IMR-90 (cell line): ENCODE measurements at regions of chr2 and their contacts with region 1.

Region 1: DNA sequence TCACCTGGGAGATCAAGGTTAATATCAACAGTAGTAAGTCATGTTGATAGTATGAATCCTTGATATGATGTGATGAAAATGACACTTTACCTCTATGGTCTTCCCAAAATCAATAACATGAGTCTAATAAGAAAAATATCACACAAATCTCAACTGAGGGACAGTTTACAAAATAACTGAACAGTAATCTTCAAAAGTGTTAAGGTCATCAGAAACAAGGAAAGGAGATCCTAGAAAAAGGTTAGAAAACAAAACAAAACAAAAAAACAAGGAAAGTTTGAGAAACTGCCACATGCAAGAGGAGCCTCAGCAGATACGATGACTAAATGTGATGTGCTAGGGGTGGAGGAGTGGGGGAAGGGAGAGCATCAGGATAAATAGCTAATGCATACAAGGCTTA is 16.2 kb downstream of the MCEE start:
- DNase-seq: no peak
- ATAC-seq: no peak
- H3K4me3 ChIP-seq: no peak overlapping the region
- H3K27ac ChIP-seq: no peak overlapping the region
- H3K4me1 ChIP-seq: no peaks in the 10 kb centered on the region
- H3K27me3 ChIP-seq: no peaks in the 10 kb centered on the region
- CTCF ChIP-seq: no peak
- POLR2A ChIP-seq: no peak
- RAD21 ChIP-seq: no peak

Region 2: GRCh38 chr2:71043531-71044407 is 70.1 kb before region 1 on chr2:
- CTCF ChIA-PET with region 1: no interaction called
- POLR2A ChIA-PET with region 1: no interaction called
- dilution Hi-C with region 1: no loop called
- in situ Hi-C with region 1: no loop called
- intact Hi-C with region 1: no loop called
- DNase-seq: no peak
- ATAC-seq: no peak
- H3K4me3 ChIP-seq: no peak overlapping the region
- H3K27ac ChIP-seq: no peak overlapping the region
- H3K4me1 ChIP-seq: no peaks in the 10 kb centered on the region
- H3K27me3 ChIP-seq: no peaks in the 10 kb centered on the region; the same call in 1 of the 2 replicates
- CTCF ChIP-seq: no peak
- POLR2A ChIP-seq: no peak
- RAD21 ChIP-seq: no peak

Region 3: DNA sequence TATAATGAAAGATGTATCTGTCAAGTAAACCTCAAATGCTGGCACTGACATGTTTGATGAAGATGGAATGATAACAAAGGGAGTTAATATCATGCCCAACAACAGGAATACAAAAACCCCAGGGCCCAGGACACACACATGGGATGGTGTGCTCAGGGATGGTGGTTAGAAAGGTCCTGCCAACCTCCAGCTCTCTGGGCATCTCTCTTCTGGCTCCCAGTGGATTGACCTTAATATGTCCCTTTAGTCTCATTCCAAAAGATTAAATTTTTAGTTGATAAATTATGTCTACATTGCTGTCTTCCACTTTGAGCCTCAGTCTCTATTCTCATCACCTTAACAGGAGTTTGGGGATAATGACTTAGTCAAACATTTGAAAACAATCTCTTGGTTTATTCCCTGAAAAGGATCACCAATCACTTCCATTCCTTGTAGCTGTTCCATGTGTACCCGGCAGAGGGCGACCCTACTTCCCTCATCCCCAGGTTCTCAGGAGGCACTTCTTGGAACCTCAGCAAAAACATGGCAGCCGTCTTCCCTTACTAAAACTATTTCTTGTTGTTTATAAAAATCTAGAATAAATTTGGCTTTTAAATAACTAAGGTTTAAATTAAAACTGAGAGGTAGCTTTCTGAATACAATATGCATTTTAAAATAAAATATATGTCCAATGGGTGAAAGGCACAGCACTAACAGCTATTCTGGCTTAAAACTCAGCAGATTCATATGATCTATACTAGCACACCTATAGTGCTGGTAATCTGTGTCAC is 13.5 kb before region 1 on chr2:
- CTCF ChIA-PET with region 1: interaction called, 20 read pairs
- POLR2A ChIA-PET with region 1: interaction called, 3 read pairs
- dilution Hi-C with region 1: no loop called
- in situ Hi-C with region 1: no loop called
- intact Hi-C with region 1: no loop called
- DNase-seq: peak; percentile 70
- ATAC-seq: peak; percentile 83
- H3K4me3 ChIP-seq: no peak overlapping the region
- H3K27ac ChIP-seq: no peak overlapping the region
- H3K4me1 ChIP-seq: no peaks in the 10 kb centered on the region
- H3K27me3 ChIP-seq: no peaks in the 10 kb centered on the region; the same call in 1 of the 2 replicates
- CTCF ChIP-seq: peak; percentile 69
- POLR2A ChIP-seq: no peak
- RAD21 ChIP-seq: peak; percentile 62

Region 4: DNA sequence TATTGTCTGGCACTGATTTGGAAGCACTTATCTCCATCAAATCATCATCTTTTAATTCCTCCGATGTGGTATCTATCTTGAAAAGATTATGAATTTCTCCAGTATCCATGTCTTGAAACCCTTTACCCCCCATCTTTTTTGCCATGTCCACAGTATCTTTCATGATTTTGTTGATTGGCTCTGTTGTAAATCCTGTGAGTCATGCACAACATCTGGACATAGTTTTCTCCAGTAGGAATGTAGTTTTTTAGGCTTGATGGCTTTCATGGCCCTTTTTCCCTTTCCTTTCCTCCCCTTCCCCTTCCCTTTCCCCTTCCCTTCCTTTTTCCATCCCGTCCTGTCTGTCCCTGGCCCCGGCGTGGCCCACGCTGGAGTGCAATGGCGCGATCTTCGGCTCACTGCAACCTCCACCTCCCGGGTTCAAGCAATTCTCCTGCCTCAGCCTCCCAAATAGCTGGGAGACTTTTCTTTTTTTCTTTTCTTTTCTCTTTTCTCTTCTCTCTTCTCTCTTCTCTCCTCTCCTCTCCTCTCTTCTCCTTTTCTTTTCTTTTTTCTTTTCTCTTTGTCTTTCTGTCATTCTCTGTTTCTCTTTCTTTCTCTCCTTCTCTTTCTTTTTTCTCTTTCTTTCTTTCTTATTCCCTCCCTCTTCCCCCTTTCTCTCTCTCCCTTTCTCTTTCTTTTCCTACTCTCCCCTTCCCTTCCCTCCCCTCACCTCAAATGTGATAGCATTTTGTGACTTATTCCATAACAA is 199.3 kb after region 1 on chr2:
- CTCF ChIA-PET with region 1: no interaction called
- POLR2A ChIA-PET with region 1: no interaction called
- dilution Hi-C with region 1: no loop called
- in situ Hi-C with region 1: no loop called
- intact Hi-C with region 1: no loop called
- DNase-seq: no peak
- ATAC-seq: no peak
- H3K4me3 ChIP-seq: no peak overlapping the region
- H3K27ac ChIP-seq: no peak overlapping the region
- H3K4me1 ChIP-seq: no peaks in the 10 kb centered on the region
- H3K27me3 ChIP-seq: no peaks in the 10 kb centered on the region; the same call in 1 of the 2 replicates
- CTCF ChIP-seq: no peak
- POLR2A ChIP-seq: no peak
- RAD21 ChIP-seq: no peak

Region 5: GRCh38 chr2:71558300-71559051 is 444.6 kb after region 1 on chr2:
- CTCF ChIA-PET with region 1: no interaction called
- POLR2A ChIA-PET with region 1: no interaction called
- dilution Hi-C with region 1: no loop called
- in situ Hi-C with region 1: no loop called
- intact Hi-C with region 1: no loop called
- DNase-seq: no peak
- ATAC-seq: no peak
- H3K4me3 ChIP-seq: no peak overlapping the region
- H3K27ac ChIP-seq: no peak overlapping the region
- H3K4me1 ChIP-seq: no peaks in the 10 kb centered on the region
- H3K27me3 ChIP-seq: peaks cover 57% of the 10 kb centered on the region
- CTCF ChIP-seq: no peak
- POLR2A ChIP-seq: no peak
- RAD21 ChIP-seq: no peak